T-cell (primary cell): ENCODE measurements at regions of chr7 and their contacts with region 1.

Region 1: GRCh38 chr7:110924281-110924680 is 166.6 kb upstream of the LRRN3 start:
- DNase-seq: no peak
- ATAC-seq: no peak
- H3K4me3 ChIP-seq: no peak overlapping the region
- H3K4me3 Mint-ChIP-seq: no peak overlapping the region
- H3K27ac ChIP-seq: no peak overlapping the region
- H3K27ac Mint-ChIP-seq: no peak overlapping the region
- H3K4me1 ChIP-seq: peaks cover 0 to 5% of the 10 kb centered on the region in 2 experiments
- H3K4me1 Mint-ChIP-seq: peaks cover 3 to 12% (median 11%) of the 10 kb centered on the region in 3 donors
- H3K27me3 ChIP-seq: no peaks in the 10 kb centered on the region
- H3K27me3 Mint-ChIP-seq: no peaks in the 10 kb centered on the region

Region 2: DNA sequence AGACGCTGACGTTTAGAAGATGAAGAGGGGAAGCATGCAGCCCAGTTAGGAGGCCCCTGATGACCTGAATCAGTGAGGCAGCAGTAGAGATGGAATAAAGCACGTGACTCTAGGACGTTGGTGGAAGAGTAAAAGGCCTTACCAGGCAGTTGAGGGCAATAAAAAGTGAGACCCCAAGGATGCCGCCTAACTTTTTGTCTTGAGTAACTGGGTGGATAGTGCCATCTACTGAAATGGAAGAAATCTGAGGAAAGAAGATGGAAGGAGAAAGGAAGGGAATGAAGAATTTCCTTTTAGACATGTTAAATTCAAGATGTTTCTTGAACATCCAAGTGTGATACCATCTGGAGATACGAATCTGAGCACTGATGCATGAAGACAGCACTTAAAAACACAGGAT is 53.4 kb before region 1 on chr7:
- CTCF ChIA-PET with region 1: no interaction called
- POLR2A ChIA-PET with region 1: no interaction called
- DNase-seq: no peak
- ATAC-seq: no peak
- H3K4me3 ChIP-seq: no peak overlapping the region
- H3K4me3 Mint-ChIP-seq: no peak overlapping the region
- H3K27ac ChIP-seq: no peak overlapping the region
- H3K27ac Mint-ChIP-seq: no peak overlapping the region
- H3K4me1 ChIP-seq: peaks cover 0 to 13% of the 10 kb centered on the region in 2 experiments
- H3K4me1 Mint-ChIP-seq: no peaks in the 10 kb centered on the region
- H3K27me3 ChIP-seq: no peaks in the 10 kb centered on the region
- H3K27me3 Mint-ChIP-seq: no peaks in the 10 kb centered on the region

Region 3: DNA sequence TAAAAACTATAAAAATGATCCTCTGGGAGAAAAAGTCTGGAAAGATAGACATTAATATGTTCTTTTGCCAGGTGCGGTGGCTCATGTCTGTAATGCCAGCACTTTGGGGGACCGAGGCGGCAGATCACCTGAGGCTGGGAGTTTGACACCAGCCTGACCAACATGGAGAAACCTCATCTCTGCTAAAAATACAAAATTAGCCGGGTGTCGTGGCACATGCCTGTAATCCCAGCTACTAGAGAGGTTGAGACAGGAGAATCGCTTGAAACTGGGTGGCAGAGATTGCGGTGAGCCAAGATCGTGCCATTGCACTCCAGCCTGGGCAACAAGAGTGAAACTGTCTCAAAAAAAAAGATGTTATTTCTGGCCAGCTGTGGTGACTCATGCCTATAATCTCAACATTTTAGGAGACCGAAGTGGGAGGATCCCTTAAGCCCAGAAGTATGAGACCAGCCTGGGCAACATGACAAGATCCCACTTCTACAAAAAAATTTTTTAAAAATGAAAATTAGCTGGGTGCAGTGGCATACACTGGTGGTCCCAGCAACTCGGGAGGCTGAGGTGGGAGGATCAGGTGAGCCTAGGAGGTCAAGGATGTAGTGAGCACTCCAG is 64.7 kb after region 1 on chr7:
- CTCF ChIA-PET with region 1: no interaction called
- POLR2A ChIA-PET with region 1: interaction called in 1 of 2 experiments, 11 read pairs
- DNase-seq: no peak
- ATAC-seq: no peak
- H3K4me3 ChIP-seq: no peak overlapping the region
- H3K4me3 Mint-ChIP-seq: no peak overlapping the region
- H3K27ac ChIP-seq: no peak overlapping the region
- H3K27ac Mint-ChIP-seq: no peak overlapping the region
- H3K4me1 ChIP-seq: peaks cover 3 to 21% of the 10 kb centered on the region in 2 experiments
- H3K4me1 Mint-ChIP-seq: peaks cover 17 to 25% (median 23%) of the 10 kb centered on the region in 3 donors
- H3K27me3 ChIP-seq: no peaks in the 10 kb centered on the region
- H3K27me3 Mint-ChIP-seq: no peaks in the 10 kb centered on the region

Region 4: DNA sequence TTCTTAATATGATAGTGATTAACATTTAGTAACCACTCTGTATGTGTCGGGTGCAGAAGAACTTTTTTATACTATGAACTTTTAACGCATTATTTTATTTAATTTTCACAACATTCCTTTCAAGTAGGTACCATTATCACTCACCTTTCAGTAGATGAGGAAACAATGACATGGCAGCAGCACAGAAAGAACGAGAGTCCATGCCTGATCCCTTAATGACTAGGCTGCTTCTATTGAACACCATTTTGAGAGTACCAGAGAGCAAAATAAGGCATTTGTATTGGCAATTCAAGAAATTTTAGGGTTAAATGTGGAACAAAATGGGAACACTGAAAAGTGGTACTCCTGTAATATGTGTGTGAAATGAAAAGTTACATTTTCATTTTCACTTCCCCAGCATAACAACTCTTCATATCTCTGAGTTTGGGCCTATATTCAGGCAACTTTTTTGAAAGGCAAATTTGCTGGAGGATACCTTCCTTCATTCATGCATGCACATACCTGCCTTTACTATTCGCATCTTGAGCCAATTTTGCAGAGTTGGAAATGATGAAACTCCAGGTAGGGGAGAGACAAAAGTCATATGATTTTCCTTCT is 179.5 kb after region 1 on chr7:
- CTCF ChIA-PET with region 1: no interaction called
- POLR2A ChIA-PET with region 1: no interaction called
- DNase-seq: no peak
- ATAC-seq: no peak
- H3K4me3 ChIP-seq: no peak overlapping the region
- H3K4me3 Mint-ChIP-seq: no peak overlapping the region
- H3K27ac ChIP-seq: no peak overlapping the region
- H3K27ac Mint-ChIP-seq: peak overlapping the region in 1 of 2 donors; percentile 30
- H3K4me1 ChIP-seq: peaks cover 0 to 68% of the 10 kb centered on the region in 2 experiments
- H3K4me1 Mint-ChIP-seq: peaks cover 42 to 59% (median 51%) of the 10 kb centered on the region in 3 donors
- H3K27me3 ChIP-seq: no peaks in the 10 kb centered on the region
- H3K27me3 Mint-ChIP-seq: no peaks in the 10 kb centered on the region